ENCODE measurements at regions of chr16 and their contacts with region 1.

Region 1: DNA sequence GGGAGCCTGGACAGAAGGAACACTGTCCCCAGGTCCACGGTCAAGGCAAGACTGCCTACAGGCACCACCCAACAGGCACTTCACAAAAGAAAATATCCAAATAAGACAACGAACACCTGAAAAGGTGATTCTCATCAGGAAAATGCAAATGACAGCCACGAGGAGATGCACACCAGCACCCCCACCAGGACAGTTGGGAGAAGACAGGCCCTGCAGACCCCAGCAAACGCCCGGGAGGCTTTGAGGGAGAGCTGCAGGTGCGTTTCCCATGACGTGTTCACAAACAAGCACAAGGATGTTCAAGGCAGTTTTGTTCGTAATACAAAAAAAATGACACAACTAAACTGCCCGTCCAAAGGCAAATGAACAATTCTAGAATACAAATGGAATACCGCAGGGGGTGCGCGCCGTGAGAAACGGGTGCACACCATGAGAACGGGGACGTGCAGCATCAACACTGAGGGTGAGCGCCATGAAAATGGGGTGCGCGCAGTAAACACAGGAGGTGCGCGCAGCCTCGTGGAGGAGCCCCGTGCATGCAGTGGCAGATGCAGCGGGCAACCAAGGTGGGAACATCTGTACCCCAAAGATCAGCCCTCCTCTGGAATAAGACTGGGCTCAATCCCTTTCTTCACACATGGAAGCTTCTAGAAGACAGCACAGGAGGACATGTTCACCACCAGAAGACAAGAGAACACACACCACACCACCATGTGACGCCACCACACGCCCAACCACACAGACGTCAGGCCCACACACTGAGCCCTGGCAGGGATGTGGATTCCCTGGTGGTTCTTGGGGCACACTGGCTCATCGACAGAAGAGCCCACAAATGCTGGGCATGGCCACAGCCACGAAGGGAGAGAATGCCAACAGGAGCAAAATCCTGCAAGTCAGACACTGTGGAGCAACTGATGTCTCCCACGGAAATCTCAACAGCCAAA is 91.2 kb downstream of the ZNF778 start:
- DNase-seq: peak; percentile 64
- ATAC-seq: peak; percentile 80
- H3K4me3 Mint-ChIP-seq: no peak overlapping the region
- H3K27ac Mint-ChIP-seq: peak overlapping the region; percentile 64
- H3K4me1 Mint-ChIP-seq: peaks cover 53% of the 10 kb centered on the region
- H3K27me3 Mint-ChIP-seq: no peaks in the 10 kb centered on the region
- CTCF ChIP-seq: peak; percentile 74

Region 2: DNA sequence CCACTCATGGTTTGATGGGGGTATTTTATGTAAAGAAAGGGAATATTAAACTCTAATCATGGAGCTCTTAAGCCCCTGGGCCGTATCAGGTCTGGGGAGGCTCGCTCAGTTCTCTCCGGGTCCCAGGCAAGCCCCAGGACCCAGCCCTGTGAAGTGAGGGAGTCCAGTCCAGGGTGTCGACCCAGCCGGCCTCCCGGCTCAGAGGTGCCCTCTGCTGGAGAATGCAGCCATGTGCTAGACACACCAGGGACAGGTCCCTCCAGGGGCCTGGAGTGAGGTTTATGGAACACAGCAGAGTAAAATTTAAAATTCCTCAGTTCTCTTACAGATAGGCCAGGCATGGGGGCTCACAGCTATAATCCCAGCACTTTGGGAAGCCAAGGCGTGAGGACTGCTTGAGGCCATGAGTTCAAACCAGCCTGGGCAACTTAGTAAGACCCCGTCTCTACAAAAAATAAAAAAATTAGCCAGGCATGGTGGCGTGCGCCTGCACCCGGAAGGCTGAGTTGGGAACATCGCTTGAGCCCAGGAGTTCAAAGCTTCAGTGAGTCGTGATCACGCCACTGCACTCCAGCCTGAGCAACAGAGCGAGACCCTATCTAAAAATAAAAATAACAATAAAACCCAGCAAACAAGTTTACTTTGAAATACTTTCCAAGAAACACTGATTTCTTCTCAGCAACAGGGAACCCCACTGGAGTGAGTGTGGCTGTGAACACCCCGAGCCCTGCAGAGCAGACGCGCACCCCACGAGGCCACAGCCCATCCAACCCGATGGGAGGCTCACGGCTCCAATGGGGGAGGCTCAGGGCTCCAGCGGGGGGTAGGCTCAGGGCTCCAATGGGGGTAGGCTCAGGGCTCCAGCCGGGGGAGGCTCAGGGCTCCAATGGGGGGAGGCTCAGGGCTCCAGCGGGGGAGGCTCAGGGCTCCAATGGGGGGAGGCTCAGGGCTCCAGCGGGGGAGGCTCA is 18.9 kb before region 1 on chr16:
- CTCF ChIA-PET with region 1: interaction called, 11 read pairs
- POLR2A ChIA-PET with region 1: no interaction called
- intact Hi-C with region 1: no loop called
- DNase-seq: peak; percentile 78
- ATAC-seq: peak; percentile 93
- H3K4me3 Mint-ChIP-seq: no peak overlapping the region
- H3K27ac Mint-ChIP-seq: peak overlapping the region; percentile 46
- H3K4me1 Mint-ChIP-seq: peaks cover 6% of the 10 kb centered on the region
- H3K27me3 Mint-ChIP-seq: no peaks in the 10 kb centered on the region
- CTCF ChIP-seq: peak; percentile 82

Measured in activated CD8-positive, alpha-beta T cell treated with anti-CD3 and anti-CD28 coated beads for 36 hours (primary cell).